ENCODE measurements at regions of chr19 and their contacts with region 1.

Region 1: GRCh38 chr19:33453265-33453664 is 68.3 kb downstream of the PEPD start:
- DNase-seq: no peak
- CTCF ChIP-seq: no peak

Region 2: DNA sequence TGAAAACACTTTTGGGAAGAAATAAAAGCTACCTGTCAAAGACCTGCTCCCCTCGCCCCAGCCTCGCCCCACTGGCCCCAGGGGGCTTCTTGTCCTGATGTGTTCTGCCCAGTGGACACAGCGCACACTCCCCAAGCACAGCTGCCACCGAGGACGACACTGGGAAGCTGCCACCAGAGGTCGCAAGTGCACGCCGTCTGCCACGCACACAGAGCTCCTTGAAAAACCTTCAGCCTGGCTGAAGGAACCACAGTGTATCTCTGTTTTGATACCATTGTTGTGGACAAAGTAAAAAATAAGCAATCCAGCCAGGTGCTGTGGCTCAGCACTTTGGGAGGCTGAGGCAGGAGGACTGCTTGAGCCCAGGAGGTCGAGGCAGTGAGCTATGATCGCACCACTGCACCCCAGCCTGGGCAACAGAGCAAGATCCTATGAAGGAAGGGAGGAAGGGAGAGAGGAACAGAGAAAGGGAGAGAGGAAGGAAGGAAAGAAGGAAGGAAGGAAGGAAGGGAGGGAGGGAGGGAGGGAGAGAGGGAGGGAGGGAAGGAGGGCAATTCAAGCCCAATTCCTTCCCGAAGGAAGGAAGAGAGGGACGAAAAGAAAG is 22.5 kb before region 1 on chr19:
- CTCF ChIA-PET with region 1: interaction called, 10 read pairs
- POLR2A ChIA-PET with region 1: no interaction called
- DNase-seq: peak; percentile 75
- CTCF ChIP-seq: peak; percentile 93

Region 3: GRCh38 chr19:33486936-33487811 is 33.9 kb after region 1 on chr19:
- CTCF ChIA-PET with region 1: no interaction called
- POLR2A ChIA-PET with region 1: no interaction called
- DNase-seq: no peak
- CTCF ChIP-seq: no peak

Region 4: DNA sequence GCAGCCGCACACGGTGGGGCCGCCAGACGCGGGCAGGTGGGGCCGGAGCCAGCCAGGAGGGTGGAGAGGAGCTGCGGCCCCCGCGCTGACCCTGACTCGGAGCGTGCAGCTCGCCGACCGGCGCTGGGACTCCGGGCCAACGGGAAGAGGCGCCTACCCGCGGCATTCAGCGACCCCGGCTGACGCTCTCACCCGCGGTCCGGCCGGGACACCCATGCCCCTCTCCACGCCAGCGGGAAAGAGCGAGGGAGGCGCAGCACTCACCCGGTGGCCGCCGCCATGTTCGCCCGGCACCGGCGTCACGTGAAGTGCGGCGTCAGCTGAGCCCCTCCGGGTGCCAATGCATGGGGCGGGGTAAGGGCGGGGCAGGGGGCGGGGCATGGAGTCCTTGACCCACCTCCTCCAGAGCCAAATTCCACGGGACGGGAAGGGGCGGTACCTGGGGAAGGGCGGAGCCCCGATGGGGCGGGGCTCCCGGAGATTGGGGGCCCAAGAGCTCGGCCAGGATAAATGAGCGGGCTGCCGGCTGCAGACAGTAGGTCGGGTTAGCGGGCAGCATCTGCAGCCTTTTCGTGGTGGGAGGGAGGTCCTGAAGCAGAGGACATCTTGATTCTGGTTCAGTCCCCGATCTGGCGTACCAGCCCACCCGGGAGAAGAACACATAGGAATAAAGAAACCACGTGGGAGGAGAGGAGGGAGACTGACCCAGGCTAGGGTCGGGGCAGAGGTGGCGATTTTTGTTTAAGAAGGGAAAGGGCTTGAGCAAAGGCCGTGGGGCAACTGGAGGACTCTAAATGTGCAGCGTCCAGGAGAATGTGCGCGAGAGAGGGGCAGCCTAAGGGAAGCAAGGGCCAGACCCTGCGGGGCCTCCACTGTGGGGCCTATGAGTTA is 68.5 kb after region 1 on chr19 and contains the start of gene PEPD:
- CTCF ChIA-PET with region 1: no interaction called
- POLR2A ChIA-PET with region 1: no interaction called
- DNase-seq: peak; percentile 100
- CTCF ChIP-seq: no peak

Measured in GM10248 (cell line).